ENCODE measurements at regions of chr3 and their contacts with region 1.

Region 1: GRCh38 chr3:28241221-28242160 is at the start of gene CMC1:
- DNase-seq: peak; percentile 97
- H3K4me3 Mint-ChIP-seq: peak within 1 kb of the TSS; percentile 94
- H3K27ac Mint-ChIP-seq: peak within 1 kb of the TSS; percentile 93
- H3K4me1 Mint-ChIP-seq: peaks cover 31% of the 10 kb centered on the region
- H3K27me3 Mint-ChIP-seq: no peaks in the 10 kb centered on the region
- total RNA-seq, gene CMC1: 21.3 and 23.2 TPM in 2 replicates

Region 2: DNA sequence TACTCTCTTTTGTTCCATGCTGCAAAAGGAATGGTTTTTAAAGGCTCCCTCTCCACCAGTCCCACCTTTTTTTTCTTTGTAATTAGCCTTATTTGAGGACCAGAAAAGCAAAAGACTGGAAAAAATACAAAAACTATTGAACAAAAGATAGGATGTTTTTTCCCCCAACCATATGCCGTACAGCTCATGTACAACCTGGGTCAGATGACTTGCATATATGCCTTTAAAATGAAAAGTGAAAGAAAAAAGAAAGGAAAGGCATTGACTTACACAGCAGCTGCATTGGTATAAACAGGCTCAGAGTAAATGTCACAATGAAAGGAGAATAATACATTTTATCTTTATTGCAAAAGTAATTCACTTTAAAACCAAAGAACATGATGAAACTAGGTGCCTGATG is 69.5 kb before region 1 on chr3:
- intact Hi-C with region 1: loop called (anchors 2 kb)
- DNase-seq: peak; percentile 60
- H3K4me3 Mint-ChIP-seq: peak overlapping the region; percentile 55
- H3K27ac Mint-ChIP-seq: peak overlapping the region; percentile 81
- H3K4me1 Mint-ChIP-seq: peaks cover 7% of the 10 kb centered on the region
- H3K27me3 Mint-ChIP-seq: peaks cover 4% of the 10 kb centered on the region

Region 3: GRCh38 chr3:28286595-28286994 is 45.1 kb after region 1 on chr3:
- intact Hi-C with region 1: loop called (anchors 5 kb)
- DNase-seq: no peak
- H3K4me3 Mint-ChIP-seq: no peak overlapping the region
- H3K27ac Mint-ChIP-seq: no peak overlapping the region
- H3K4me1 Mint-ChIP-seq: peaks cover 12% of the 10 kb centered on the region
- H3K27me3 Mint-ChIP-seq: no peaks in the 10 kb centered on the region

Region 4: GRCh38 chr3:28348629-28349483 is 107.4 kb after region 1 on chr3 and contains the starts of genes AZI2 and ZCWPW2:
- intact Hi-C with region 1: loop called (anchors 1 kb)
- DNase-seq: peak; percentile 98
- H3K4me3 Mint-ChIP-seq: peak within 1 kb of the TSS; percentile 98
- H3K27ac Mint-ChIP-seq: peak within 1 kb of the TSS; percentile 96
- H3K4me1 Mint-ChIP-seq: peaks cover 41% of the 10 kb centered on the region
- H3K27me3 Mint-ChIP-seq: no peaks in the 10 kb centered on the region
- total RNA-seq, gene AZI2: 35.6 and 38.7 TPM in 2 replicates
- total RNA-seq, gene ZCWPW2: 0.14 TPM in 1 of 2 replicates, not detected in the other

Measured in activated CD4-positive, alpha-beta T cell treated with anti-CD3 and anti-CD28 coated beads, Interleukin-2, amount 10 ng/mL, durations not matched to agents 24 days and 14 days (primary cell).